Sciatic nerve (tissue), 2 donors: ENCODE measurements at regions of chr1 and their contacts with region 1.

Region 1: DNA sequence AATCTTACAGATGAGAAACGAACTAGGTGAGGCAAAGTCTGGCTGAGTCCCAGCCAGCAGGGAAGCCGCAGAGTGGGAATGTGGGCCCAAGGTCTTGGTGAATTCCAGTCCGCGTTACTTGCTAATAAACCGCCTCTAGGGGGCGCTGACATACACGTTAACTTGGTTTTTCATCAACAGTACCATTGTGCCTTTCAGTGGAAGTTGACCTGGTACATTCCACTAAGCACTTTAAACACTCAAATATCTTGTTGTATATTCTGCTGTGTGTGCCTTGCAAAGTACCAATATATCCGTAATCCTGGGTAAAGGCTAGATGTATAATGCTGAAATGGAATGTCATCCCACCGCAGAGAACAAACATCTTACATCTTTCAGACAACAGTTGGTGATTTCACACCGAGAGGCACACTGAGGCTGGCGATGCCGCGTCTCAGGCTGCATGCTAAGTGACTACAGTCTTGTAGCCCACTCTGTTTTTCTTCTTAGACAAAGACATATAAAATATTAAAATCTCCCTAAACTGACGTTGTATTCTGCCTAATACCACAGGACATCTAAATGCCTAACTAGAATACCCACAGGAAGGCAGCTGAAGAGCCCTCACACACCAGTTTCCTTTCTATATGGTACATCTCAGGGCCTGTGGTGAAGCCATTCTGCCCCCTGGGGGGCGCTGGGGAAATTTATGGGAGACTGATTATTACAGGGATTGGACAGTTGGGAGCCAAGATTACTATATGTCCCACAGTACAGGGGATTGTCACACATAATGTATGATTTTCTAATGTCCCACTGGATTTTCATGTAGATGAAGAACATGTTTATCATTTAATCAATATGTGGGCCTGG is 49.2 kb upstream of the C1orf198 start:
- DNase-seq: peak; percentile 86
- ATAC-seq: peak; percentile 85

Region 2: GRCh38 chr1:230797942-230798418 is 119.5 kb before region 1 on chr1:
- intact Hi-C with region 1: loop called (anchors 1 kb)
- DNase-seq: peak; percentile 81
- ATAC-seq: peak; percentile 94

Region 3: GRCh38 chr1:232477728-232478127 is 1560.2 kb after region 1 on chr1:
- intact Hi-C with region 1: loop called (anchors 10 kb)
- DNase-seq: no peak
- ATAC-seq: peak; percentile 84